Tibial artery (tissue), 4 donors: ENCODE measurements at regions of chr5 and their contacts with region 1.

Region 1: DNA sequence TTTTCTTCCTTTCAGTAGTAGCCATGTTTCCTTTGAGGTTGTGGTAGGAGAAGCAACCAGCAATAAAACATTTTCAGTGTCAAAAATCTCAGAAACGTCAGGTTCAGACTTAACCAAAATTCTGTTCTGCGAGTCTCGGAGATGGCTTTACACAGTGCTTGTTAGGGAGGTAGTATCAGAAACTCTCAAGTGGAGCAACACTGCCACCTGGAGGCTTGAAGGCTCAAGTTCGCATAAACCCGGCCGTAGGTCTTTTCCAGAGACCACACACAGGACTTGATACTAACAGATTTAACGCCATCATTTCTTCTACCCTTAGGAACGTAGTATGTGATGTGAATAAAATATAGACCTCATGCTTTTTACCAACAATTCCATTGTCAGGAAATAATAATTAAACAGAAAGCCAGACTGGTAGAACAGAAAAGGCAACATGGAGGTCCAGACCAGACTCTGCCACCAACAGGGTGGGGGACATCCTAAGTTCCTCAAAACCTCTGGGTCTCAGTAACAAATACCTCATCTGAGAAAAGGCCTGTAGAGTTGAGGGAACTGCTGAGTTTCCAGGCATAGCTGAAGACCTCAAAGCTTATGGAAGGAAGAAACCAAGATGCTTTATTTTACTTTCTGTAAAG is 8.5 kb downstream of the PTGER4 start:
- DNase-seq: peak; percentile 78 to 88
- H3K4me3 ChIP-seq: no peak overlapping the region
- H3K27ac ChIP-seq: peak overlapping the region; percentile 12 to 87
- H3K4me1 ChIP-seq: peaks cover 0 to 66% (median 7%) of the 10 kb centered on the region in 4 donors
- H3K27me3 ChIP-seq: no peaks in the 10 kb centered on the region
- CTCF ChIP-seq: peak; percentile 88 to 93

Region 2: GRCh38 chr5:39714036-39714698 is 974.1 kb before region 1 on chr5:
- intact Hi-C with region 1: loop called (anchors 5 kb)
- DNase-seq: peak in 1 of 2 donors; percentile 32
- H3K4me3 ChIP-seq: no peak overlapping the region
- H3K27ac ChIP-seq: no peak overlapping the region
- H3K4me1 ChIP-seq: no peaks in the 10 kb centered on the region
- H3K27me3 ChIP-seq: no peaks in the 10 kb centered on the region
- CTCF ChIP-seq: peak; percentile 60 to 78

Region 3: GRCh38 chr5:39951070-39951469 is 737.2 kb before region 1 on chr5:
- intact Hi-C with region 1: loop called (anchors 2 kb)
- DNase-seq: no peak
- H3K4me3 ChIP-seq: no peak overlapping the region
- H3K27ac ChIP-seq: no peak overlapping the region
- H3K4me1 ChIP-seq: no peaks in the 10 kb centered on the region
- H3K27me3 ChIP-seq: no peaks in the 10 kb centered on the region
- CTCF ChIP-seq: no peak

Region 4: GRCh38 chr5:40578501-40579451 is 109.5 kb before region 1 on chr5:
- intact Hi-C with region 1: no loop called
- DNase-seq: no peak
- H3K4me3 ChIP-seq: no peak overlapping the region
- H3K27ac ChIP-seq: no peak overlapping the region
- H3K4me1 ChIP-seq: no peaks in the 10 kb centered on the region
- H3K27me3 ChIP-seq: no peaks in the 10 kb centered on the region
- CTCF ChIP-seq: no peak

Region 5: GRCh38 chr5:40879163-40879942 is 191.1 kb after region 1 on chr5:
- intact Hi-C with region 1: no loop called
- DNase-seq: no peak
- H3K4me3 ChIP-seq: no peak overlapping the region
- H3K27ac ChIP-seq: no peak overlapping the region
- H3K4me1 ChIP-seq: no peaks in the 10 kb centered on the region
- H3K27me3 ChIP-seq: no peaks in the 10 kb centered on the region
- CTCF ChIP-seq: peak; percentile 60 to 62